MCF 10A (cell line): ENCODE measurements at regions of chr16 and their contacts with region 1.

Region 1: GRCh38 chr16:81526935-81527334 is 82.3 kb downstream of the CMIP start:
- DNase-seq: peak; percentile 96
- H3K4me3 Mint-ChIP-seq: peak overlapping the region; percentile 65
- H3K27ac Mint-ChIP-seq: peak overlapping the region; percentile 97
- H3K4me1 Mint-ChIP-seq: peaks cover 68% of the 10 kb centered on the region
- H3K27me3 Mint-ChIP-seq: no peaks in the 10 kb centered on the region
- CTCF ChIP-seq: no peak

Region 2: DNA sequence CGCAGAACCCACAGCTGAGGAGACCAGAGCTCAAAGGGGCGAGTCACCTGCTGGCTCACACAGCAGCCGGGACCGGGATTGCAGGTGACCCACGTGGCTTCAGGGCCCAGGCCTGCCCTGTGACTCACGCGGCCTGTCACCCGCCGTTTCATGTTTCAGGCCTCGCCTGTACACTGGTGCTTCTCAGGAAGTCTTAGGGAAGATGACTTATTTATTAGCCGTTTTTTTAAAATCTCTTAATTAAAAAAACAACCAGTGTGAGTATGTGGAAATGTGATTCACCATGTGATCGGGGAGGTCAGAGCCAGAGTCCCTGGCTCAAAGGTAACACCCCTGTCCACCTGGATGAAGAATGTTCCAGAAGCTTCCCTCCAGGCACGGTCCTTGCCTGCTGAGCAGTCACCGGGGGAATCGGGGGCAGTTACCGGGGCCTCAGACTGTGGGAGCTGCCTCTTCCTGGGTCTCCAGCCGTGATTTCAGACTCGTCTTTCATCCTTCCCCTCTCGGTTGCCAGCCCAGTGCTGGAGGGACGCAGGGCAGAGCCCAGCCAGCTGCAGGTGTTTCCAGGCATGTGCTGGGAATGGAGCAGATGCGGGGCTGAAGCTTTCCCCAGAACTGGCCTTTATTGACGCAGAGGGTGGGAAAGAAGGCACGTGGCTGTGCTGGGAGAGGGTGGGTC is 33.0 kb before region 1 on chr16:
- CTCF ChIA-PET with region 1: interaction called, 6 read pairs
- POLR2A ChIA-PET with region 1: interaction called, 27 read pairs
- intact Hi-C with region 1: no loop called
- DNase-seq: peak; percentile 89
- H3K4me3 Mint-ChIP-seq: peak overlapping the region; percentile 14
- H3K27ac Mint-ChIP-seq: peak overlapping the region; percentile 89
- H3K4me1 Mint-ChIP-seq: peaks cover 43% of the 10 kb centered on the region
- H3K27me3 Mint-ChIP-seq: no peaks in the 10 kb centered on the region
- CTCF ChIP-seq: no peak

Region 3: GRCh38 chr16:81505011-81505661 is 21.8 kb before region 1 on chr16:
- CTCF ChIA-PET with region 1: interaction called, 6 read pairs
- POLR2A ChIA-PET with region 1: interaction called, 31 read pairs
- intact Hi-C with region 1: no loop called
- DNase-seq: peak; percentile 85
- H3K4me3 Mint-ChIP-seq: peak overlapping the region; percentile 40
- H3K27ac Mint-ChIP-seq: peak overlapping the region; percentile 73
- H3K4me1 Mint-ChIP-seq: peaks cover 29% of the 10 kb centered on the region
- H3K27me3 Mint-ChIP-seq: no peaks in the 10 kb centered on the region
- CTCF ChIP-seq: no peak

Region 4: GRCh38 chr16:81567987-81568748 is 41.2 kb after region 1 on chr16:
- CTCF ChIA-PET with region 1: interaction called, 5 read pairs
- POLR2A ChIA-PET with region 1: interaction called, 14 read pairs
- intact Hi-C with region 1: no loop called
- DNase-seq: peak; percentile 86
- H3K4me3 Mint-ChIP-seq: no peak overlapping the region
- H3K27ac Mint-ChIP-seq: peak overlapping the region; percentile 21
- H3K4me1 Mint-ChIP-seq: peaks cover 31% of the 10 kb centered on the region
- H3K27me3 Mint-ChIP-seq: no peaks in the 10 kb centered on the region
- CTCF ChIP-seq: no peak

Region 5: DNA sequence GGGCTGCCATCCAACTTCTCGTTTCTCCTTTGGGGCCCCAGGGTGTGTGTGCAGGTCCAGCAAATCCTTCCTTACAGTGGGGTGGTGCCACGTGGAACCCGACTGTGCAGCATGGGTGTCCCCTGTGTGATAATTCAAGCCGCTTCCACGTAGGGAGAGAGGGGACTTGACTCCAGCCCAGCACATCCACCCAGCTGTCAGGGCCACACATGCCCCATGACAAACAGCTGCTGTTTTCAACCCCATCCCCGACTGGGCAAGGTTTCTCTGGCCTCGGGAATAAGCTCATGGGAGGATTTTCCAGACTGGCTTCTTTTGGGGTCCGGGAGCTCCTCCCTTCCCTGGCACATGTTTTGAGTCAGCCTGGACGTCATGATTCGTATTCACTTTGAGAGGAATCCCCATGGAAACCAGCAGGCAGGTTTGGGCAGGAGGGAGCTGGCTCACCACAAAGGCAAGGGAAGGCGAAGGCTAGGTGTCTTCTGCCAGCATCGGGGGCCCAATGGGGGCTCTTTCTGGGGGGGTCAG is 74.0 kb after region 1 on chr16:
- CTCF ChIA-PET with region 1: interaction called, 5 read pairs
- POLR2A ChIA-PET with region 1: interaction called, 64 read pairs
- intact Hi-C with region 1: no loop called
- DNase-seq: peak; percentile 86
- H3K4me3 Mint-ChIP-seq: no peak overlapping the region
- H3K27ac Mint-ChIP-seq: peak overlapping the region; percentile 88
- H3K4me1 Mint-ChIP-seq: peaks cover 58% of the 10 kb centered on the region
- H3K27me3 Mint-ChIP-seq: no peaks in the 10 kb centered on the region
- CTCF ChIP-seq: no peak

Region 6: GRCh38 chr16:81696961-81697615 is 170.2 kb after region 1 on chr16:
- CTCF ChIA-PET with region 1: no interaction called
- POLR2A ChIA-PET with region 1: no interaction called
- intact Hi-C with region 1: loop called (anchors 1 kb)
- DNase-seq: peak; percentile 52
- H3K4me3 Mint-ChIP-seq: no peak overlapping the region
- H3K27ac Mint-ChIP-seq: no peak overlapping the region
- H3K4me1 Mint-ChIP-seq: no peaks in the 10 kb centered on the region
- H3K27me3 Mint-ChIP-seq: no peaks in the 10 kb centered on the region
- CTCF ChIP-seq: peak; percentile 84